Transverse colon (tissue), 4 donors: ENCODE measurements at regions of chr21 and their contacts with region 1.

Region 1: GRCh38 chr21:30818837-30819610 is 6.0 kb upstream of the KRTAP8-1 start:
- DNase-seq: no peak
- H3K4me3 ChIP-seq: no peak overlapping the region
- H3K27ac ChIP-seq: no peak overlapping the region
- H3K4me1 ChIP-seq: no peaks in the 10 kb centered on the region
- H3K27me3 ChIP-seq: no peaks in the 10 kb centered on the region
- CTCF ChIP-seq: no peak
- EP300 ChIP-seq: no peak
- POLR2A ChIP-seq: no peak

Region 2: GRCh38 chr21:30924146-30924700 is 105.2 kb after region 1 on chr21:
- in situ Hi-C with region 1: loop called in 1 of 4 experiments (anchors 25 kb)
- intact Hi-C with region 1: no loop called
- DNase-seq: no peak
- H3K4me3 ChIP-seq: no peak overlapping the region
- H3K27ac ChIP-seq: no peak overlapping the region
- H3K4me1 ChIP-seq: no peaks in the 10 kb centered on the region
- H3K27me3 ChIP-seq: no peaks in the 10 kb centered on the region
- CTCF ChIP-seq: no peak
- EP300 ChIP-seq: no peak
- POLR2A ChIP-seq: no peak